ENCODE measurements at regions of chr6 and their contacts with region 1.

Region 1: DNA sequence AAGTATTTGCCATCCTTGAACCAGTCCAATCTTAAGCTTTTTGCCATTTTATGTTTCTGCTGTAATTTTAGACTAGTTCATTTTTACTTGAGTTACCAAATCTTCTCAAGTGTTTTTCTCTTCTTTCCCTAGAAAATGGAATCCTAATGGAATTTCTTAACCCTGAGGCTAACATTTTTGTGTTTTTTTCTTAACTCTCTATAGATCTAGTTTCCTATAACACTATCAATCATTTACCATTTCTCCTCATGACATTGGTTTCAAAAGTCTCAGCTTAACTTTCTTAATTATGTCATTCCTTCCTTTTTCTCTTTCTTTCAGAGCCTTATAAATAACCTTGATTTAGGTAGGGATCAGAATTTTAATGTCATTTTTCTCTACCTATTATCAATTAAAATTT is 54.8 kb downstream of the SENP6 start:
- DNase-seq: no peak
- H3K4me3 ChIP-seq: no peak overlapping the region
- H3K27ac ChIP-seq: no peak overlapping the region
- H3K4me1 ChIP-seq: no peaks in the 10 kb centered on the region
- CTCF ChIP-seq: no peak

Region 2: DNA sequence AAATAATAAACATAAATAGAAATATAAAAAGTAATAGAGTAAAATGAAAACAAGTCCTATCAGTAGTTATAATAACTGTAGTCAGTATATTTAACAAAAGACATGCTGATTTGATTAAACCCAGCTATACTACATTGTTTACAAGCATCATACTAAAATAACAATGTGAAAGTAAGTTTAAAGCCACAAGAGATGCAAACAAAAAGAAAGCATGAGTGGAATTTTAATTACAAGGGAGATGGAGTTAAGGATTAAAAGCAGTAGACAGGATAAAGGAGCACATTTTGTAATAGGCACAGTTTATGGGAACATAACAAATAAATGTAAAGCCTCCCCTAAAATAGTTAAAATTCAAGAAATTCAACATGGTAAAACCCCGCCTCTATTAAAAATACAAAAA is 13.3 kb before region 1 on chr6:
- CTCF ChIA-PET with region 1: no interaction called
- POLR2A ChIA-PET with region 1: interaction called, 19 read pairs
- intact Hi-C with region 1: no loop called
- DNase-seq: no peak
- H3K4me3 ChIP-seq: no peak overlapping the region
- H3K27ac ChIP-seq: no peak overlapping the region
- H3K4me1 ChIP-seq: no peaks in the 10 kb centered on the region
- CTCF ChIP-seq: no peak